ENCODE measurements at regions of chr15 and their contacts with region 1.

Region 1: GRCh38 chr15:67065444-67066093 is at the start of gene SMAD3:
- DNase-seq: peak; percentile 93
- total RNA-seq, gene SMAD3: 18.4 TPM

Region 2: GRCh38 chr15:66830358-66830757 is 235.2 kb before region 1 on chr15:
- intact Hi-C with region 1: no loop called
- DNase-seq: peak; percentile 84

Region 3: GRCh38 chr15:66946578-66947164 is 118.9 kb before region 1 on chr15:
- intact Hi-C with region 1: no loop called
- DNase-seq: no peak

Region 4: GRCh38 chr15:67024314-67024997 is 41.1 kb before region 1 on chr15:
- intact Hi-C with region 1: loop called (anchors 2 kb)
- DNase-seq: peak; percentile 86

Region 5: DNA sequence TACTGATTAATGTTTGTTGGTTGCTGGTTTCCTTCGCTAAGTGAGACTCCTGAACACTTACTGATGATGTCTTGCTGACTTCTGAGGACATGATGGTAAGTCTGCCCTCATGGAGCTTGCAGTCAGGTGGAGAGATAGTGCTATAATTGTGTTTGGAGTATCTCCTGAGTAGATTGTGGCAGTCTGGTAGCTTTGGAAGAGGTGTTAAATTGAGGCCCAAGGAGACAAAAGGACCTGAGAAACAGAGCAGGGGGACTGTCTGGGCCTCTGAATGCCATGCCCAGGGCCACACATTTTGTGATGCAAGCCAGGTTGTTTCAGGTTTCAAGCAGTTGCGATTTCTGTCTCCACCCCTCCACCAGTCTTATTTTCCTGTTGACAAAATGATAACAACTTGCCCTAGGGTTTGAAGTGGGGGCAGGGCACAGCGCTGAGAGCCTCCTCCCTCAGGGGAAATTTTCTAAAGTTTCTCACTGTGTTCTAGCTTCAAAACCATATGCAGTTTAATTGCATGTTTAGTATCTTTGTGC is 16.5 kb after region 1 on chr15:
- intact Hi-C with region 1: loop called (anchors 1 kb)
- DNase-seq: no peak

Region 6: GRCh38 chr15:67087507-67088174 is 22.1 kb after region 1 on chr15:
- intact Hi-C with region 1: loop called (anchors 1 kb)
- DNase-seq: no peak

Region 7: GRCh38 chr15:67175643-67176071 is 110.1 kb after region 1 on chr15:
- intact Hi-C with region 1: no loop called
- DNase-seq: peak; percentile 83

Region 8: GRCh38 chr15:67254238-67255175 is 188.9 kb after region 1 on chr15 and contains the starts of genes AAGAB and IQCH:
- intact Hi-C with region 1: loop called (anchors 10 kb)
- DNase-seq: peak; percentile 99
- total RNA-seq, gene AAGAB: 24.1 TPM
- total RNA-seq, gene IQCH: 0.94 TPM